ENCODE measurements at regions of chr19 and their contacts with region 1.

Region 1: GRCh38 chr19:18251587-18252369 is 22.5 kb downstream of the IQCN start:
- DNase-seq: peak; percentile 74 to 79 (median 76)
- H3K4me3 ChIP-seq: no peak overlapping the region
- H3K4me3 Mint-ChIP-seq: no peak overlapping the region
- H3K27ac ChIP-seq: no peak overlapping the region
- H3K27ac Mint-ChIP-seq: peak overlapping the region in 2 of 7 donors; percentile 4 to 66
- H3K4me1 ChIP-seq: no peaks in the 10 kb centered on the region
- H3K4me1 Mint-ChIP-seq: peaks cover 1 to 7% (median 5%) of the 10 kb centered on the region in 4 donors
- H3K27me3 ChIP-seq: no peaks in the 10 kb centered on the region
- H3K27me3 Mint-ChIP-seq: peaks cover 4 to 9% of the 10 kb centered on the region in 2 donors

Region 2: DNA sequence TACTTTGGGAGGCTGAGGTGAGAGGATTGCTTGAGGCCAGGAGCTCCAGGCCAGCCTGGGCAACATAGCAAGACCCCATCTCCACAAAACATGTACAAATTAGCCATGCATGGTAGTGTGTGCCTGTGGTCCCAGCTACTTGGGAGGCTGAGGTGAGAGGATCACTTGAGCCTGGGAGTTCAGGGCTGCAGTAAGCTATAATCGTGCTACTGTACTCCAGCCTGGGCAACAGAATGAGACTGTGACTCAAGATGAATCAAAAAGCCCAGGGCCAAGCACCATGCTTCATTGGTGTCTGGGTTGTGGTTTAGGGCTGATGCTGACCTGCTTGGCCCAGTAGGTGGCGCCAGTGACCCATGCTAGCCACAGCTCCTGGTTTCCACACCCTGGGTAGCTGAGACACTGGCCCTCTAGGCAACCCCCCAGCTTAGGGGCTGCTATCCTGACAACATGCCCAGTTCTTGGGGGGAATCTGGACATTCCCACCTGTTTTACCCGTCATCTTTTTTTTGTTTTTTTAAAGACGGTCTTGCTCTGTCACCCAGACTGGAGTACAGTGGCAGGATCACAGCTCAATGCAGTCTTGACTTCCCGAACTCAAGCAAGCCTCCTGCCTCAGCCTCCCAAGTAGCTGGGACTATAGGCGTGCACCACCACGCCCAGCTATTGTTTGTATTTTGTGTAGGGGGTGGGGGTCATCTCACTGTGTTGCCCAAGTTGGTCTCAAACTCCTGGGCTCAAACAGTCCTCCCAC is 313.5 kb before region 1 on chr19:
- CTCF ChIA-PET with region 1: interaction called, 3 read pairs
- POLR2A ChIA-PET with region 1: no interaction called
- intact Hi-C with region 1: loop called (anchors 2 kb)
- DNase-seq: peak; percentile 77 to 82 (median 80)
- H3K4me3 ChIP-seq: no peak overlapping the region
- H3K4me3 Mint-ChIP-seq: no peak overlapping the region
- H3K27ac ChIP-seq: no peak overlapping the region
- H3K27ac Mint-ChIP-seq: peak overlapping the region in 1 of 7 donors; percentile 52
- H3K4me1 ChIP-seq: peaks cover 7% of the 10 kb centered on the region
- H3K4me1 Mint-ChIP-seq: peaks cover 4 to 10% (median 7%) of the 10 kb centered on the region in 4 donors
- H3K27me3 ChIP-seq: no peaks in the 10 kb centered on the region
- H3K27me3 Mint-ChIP-seq: no peaks in the 10 kb centered on the region

Region 3: GRCh38 chr19:18063463-18063862 is 188.3 kb before region 1 on chr19:
- CTCF ChIA-PET with region 1: interaction called, 3 read pairs
- POLR2A ChIA-PET with region 1: no interaction called
- intact Hi-C with region 1: loop called (anchors 1 kb)
- DNase-seq: peak in 3 of 5 donors; percentile 24 to 32 (median 24)
- H3K4me3 ChIP-seq: no peak overlapping the region
- H3K4me3 Mint-ChIP-seq: peak overlapping the region in 1 of 8 donors; percentile 59
- H3K27ac ChIP-seq: no peak overlapping the region
- H3K27ac Mint-ChIP-seq: peak overlapping the region in 4 of 7 donors; percentile 16 to 76 (median 43)
- H3K4me1 ChIP-seq: peaks cover 3% of the 10 kb centered on the region
- H3K4me1 Mint-ChIP-seq: peaks cover 2 to 6% (median 3%) of the 10 kb centered on the region in 4 donors
- H3K27me3 ChIP-seq: no peaks in the 10 kb centered on the region
- H3K27me3 Mint-ChIP-seq: no peaks in the 10 kb centered on the region

Region 4: DNA sequence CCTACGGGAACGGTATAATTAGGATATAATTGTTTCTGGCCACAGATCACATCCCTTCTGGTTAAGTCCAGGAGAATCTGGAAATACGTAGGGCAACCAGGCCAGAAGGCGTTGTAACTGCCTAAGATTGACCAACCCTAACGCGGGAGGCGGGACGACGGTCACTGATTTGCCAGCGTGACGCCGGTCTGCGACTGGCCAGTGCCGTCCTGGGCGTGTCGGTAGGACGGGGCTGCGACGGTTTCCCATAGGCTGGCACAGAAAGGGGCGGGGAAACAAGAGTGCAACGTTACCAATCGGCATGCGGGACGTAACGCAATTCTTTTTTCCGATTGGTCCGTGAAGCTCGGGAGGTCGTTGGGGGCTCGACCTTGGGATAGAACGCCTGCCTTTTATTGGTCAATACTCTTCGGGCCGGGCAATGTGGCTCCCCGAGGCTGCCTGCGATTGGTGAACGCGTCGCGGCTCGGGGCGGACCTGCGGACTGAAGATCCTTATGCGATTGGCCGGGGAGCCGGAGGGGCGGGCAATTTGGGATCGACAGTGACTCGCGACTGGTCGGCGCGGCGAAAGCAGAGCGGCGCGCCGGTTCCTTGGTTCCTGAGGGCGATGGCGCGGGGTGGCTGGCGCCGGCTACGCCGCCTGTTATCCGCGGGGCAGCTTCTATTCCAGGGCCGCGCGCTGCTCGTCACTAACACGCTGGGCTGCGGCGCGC is 58.9 kb before region 1 on chr19 and contains the start of gene MPV17L2:
- CTCF ChIA-PET with region 1: interaction called, 79 read pairs
- POLR2A ChIA-PET with region 1: interaction called, 12 read pairs
- intact Hi-C with region 1: loop called (anchors 1 kb)
- DNase-seq: peak; percentile 98 to 100 (median 99)
- H3K4me3 ChIP-seq: peak within 1 kb of the TSS; percentile 63 to 83
- H3K4me3 Mint-ChIP-seq: peak within 1 kb of the TSS; percentile 87 to 96 (median 92)
- H3K27ac ChIP-seq: peak within 1 kb of the TSS; percentile 73
- H3K27ac Mint-ChIP-seq: peak within 1 kb of the TSS; percentile 89 to 98 (median 96)
- H3K4me1 ChIP-seq: peaks cover 22% of the 10 kb centered on the region
- H3K4me1 Mint-ChIP-seq: peaks cover 11 to 26% (median 20%) of the 10 kb centered on the region in 4 donors
- H3K27me3 ChIP-seq: no peaks in the 10 kb centered on the region
- H3K27me3 Mint-ChIP-seq: no peaks in the 10 kb centered on the region
- total RNA-seq, gene MPV17L2: 7.6 to 7.8 TPM

Region 5: GRCh38 chr19:18286973-18287635 is 35.3 kb after region 1 on chr19:
- CTCF ChIA-PET with region 1: no interaction called
- POLR2A ChIA-PET with region 1: no interaction called
- intact Hi-C with region 1: no loop called
- DNase-seq: no peak
- H3K4me3 ChIP-seq: no peak overlapping the region
- H3K4me3 Mint-ChIP-seq: no peak overlapping the region
- H3K27ac ChIP-seq: no peak overlapping the region
- H3K27ac Mint-ChIP-seq: peak overlapping the region in 5 of 7 donors; percentile 32 to 91 (median 85)
- H3K4me1 ChIP-seq: peaks cover 59% of the 10 kb centered on the region
- H3K4me1 Mint-ChIP-seq: peaks cover 37 to 70% (median 53%) of the 10 kb centered on the region in 4 donors
- H3K27me3 ChIP-seq: no peaks in the 10 kb centered on the region
- H3K27me3 Mint-ChIP-seq: no peaks in the 10 kb centered on the region

Region 6: GRCh38 chr19:18328340-18329034 is 76.7 kb after region 1 on chr19:
- CTCF ChIA-PET with region 1: interaction called, 19 read pairs
- POLR2A ChIA-PET with region 1: no interaction called
- intact Hi-C with region 1: loop called (anchors 1 kb)
- DNase-seq: peak; percentile 87 to 91 (median 88)
- H3K4me3 ChIP-seq: no peak overlapping the region
- H3K4me3 Mint-ChIP-seq: peak overlapping the region; percentile 42 to 83 (median 62)
- H3K27ac ChIP-seq: no peak overlapping the region
- H3K27ac Mint-ChIP-seq: peak overlapping the region; percentile 24 to 90 (median 69)
- H3K4me1 ChIP-seq: peaks cover 15% of the 10 kb centered on the region
- H3K4me1 Mint-ChIP-seq: peaks cover 8 to 18% (median 11%) of the 10 kb centered on the region in 4 donors
- H3K27me3 ChIP-seq: no peaks in the 10 kb centered on the region
- H3K27me3 Mint-ChIP-seq: peaks cover 0 to 1% of the 10 kb centered on the region in 2 donors

Region 7: GRCh38 chr19:18496167-18496979 is 244.6 kb after region 1 on chr19:
- CTCF ChIA-PET with region 1: no interaction called
- POLR2A ChIA-PET with region 1: no interaction called
- intact Hi-C with region 1: no loop called
- DNase-seq: peak; percentile 75 to 96 (median 83)
- H3K4me3 ChIP-seq: peak overlapping the region; percentile 36 to 43
- H3K4me3 Mint-ChIP-seq: peak overlapping the region; percentile 77 to 86 (median 81)
- H3K27ac ChIP-seq: peak overlapping the region; percentile 90
- H3K27ac Mint-ChIP-seq: peak overlapping the region; percentile 95 to 98 (median 97)
- H3K4me1 ChIP-seq: peaks cover 96% of the 10 kb centered on the region
- H3K4me1 Mint-ChIP-seq: peaks cover 59 to 96% (median 81%) of the 10 kb centered on the region in 4 donors
- H3K27me3 ChIP-seq: no peaks in the 10 kb centered on the region
- H3K27me3 Mint-ChIP-seq: no peaks in the 10 kb centered on the region

Region 8: DNA sequence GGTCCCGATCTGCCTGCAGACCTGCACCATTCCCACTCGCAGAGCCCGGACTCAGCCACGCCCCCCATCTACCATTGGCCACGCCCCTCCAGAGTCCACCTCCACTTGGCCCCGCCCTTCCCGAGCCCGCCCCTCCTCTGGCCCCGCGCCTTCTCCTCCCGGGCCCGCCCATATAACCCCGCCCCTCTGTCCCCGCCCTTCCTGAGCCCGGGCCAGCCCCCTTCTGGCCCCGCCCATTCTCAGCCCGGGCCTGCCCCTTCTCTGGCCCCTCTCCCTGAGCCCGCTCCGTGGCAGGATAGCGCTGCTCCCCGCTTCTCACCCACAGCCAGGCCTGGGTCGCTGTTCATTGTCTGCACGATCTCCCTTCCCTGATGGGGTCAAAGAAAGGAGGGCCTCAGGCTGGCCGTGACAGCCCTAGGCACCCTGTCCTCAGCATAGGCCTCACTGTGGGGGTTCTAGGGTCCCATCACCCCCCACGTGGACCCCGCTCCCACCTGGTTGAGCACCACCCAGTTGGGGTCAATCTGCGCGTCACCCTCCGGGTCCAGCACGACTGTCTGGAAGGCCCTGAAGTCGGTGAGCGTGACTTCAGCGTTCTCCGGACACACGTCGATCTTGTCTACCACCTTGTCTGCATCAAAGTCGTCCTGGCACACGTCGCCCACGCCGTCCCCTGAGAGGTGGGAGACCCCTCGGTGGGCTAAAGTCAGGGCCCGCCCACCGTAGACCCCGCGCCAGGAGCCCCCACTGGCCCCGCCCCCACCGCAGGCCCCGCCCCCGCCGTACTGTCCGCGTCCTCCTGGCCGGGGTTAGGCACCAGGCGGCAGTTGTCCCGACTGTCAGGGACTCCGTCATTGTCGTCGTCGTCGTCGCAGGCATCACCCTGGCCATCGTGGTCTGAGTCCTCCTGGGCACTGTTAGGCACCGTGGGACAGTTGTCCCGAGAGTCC is 533.7 kb after region 1 on chr19:
- CTCF ChIA-PET with region 1: no interaction called
- POLR2A ChIA-PET with region 1: no interaction called
- intact Hi-C with region 1: no loop called
- DNase-seq: peak in 4 of 5 donors; percentile 29 to 69 (median 48)
- H3K4me3 ChIP-seq: no peak overlapping the region
- H3K4me3 Mint-ChIP-seq: peak overlapping the region; percentile 21 to 78 (median 48)
- H3K27ac ChIP-seq: no peak overlapping the region
- H3K27ac Mint-ChIP-seq: peak overlapping the region in 3 of 7 donors; percentile 22 to 80 (median 23)
- H3K4me1 ChIP-seq: peaks cover 27% of the 10 kb centered on the region
- H3K4me1 Mint-ChIP-seq: peaks cover 20 to 46% (median 31%) of the 10 kb centered on the region in 4 donors
- H3K27me3 ChIP-seq: peaks cover 17% of the 10 kb centered on the region
- H3K27me3 Mint-ChIP-seq: peaks cover 26 to 38% of the 10 kb centered on the region in 2 donors

Measured in CD4-positive, alpha-beta memory T cell (primary cell).